OCI-LY7 (cell line): ENCODE measurements at regions of chr5 and their contacts with region 1.

Region 1: DNA sequence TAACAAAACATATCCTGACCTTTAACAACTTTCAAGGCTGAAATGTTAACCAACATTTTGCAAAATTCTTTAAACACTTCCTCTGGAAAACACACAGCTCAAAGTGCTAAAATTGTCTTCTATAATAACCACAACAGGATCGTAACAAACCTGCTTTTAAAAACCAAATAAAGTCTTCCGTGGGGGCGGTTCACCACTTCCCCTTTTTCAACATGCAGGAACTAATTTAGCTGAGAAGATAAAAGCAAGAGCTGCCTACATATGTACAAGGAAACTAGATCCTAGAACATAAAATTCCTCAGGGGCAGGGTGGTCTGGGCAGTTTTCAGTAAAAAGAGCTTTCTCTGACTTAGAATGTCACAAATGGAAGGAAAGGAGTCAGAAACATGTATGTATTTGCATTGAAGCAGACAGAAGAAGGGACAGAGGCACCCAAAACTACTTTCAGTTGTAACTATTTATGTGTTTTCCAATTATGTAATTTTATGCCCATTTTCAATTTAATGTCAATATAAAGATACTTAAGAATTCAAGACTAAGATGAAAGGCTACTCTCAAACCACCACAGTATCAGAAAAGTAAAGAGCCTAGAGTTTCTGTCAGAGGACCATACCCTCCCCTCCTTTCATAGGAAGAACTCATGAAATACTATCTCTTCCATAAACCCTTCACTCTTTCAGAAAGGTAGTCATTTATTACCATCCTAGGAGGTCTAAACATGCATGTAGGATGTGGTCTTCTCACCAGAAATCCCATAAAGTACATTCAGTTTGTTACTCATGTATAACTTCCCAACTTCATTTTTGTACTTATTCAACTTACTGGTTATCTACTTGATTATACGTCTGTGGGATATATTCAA is 185.9 kb upstream of the RASA1 start:
- DNase-seq: peak; percentile 77
- H3K4me3 ChIP-seq: peak overlapping the region; percentile 54
- H3K27ac ChIP-seq: peak overlapping the region; percentile 77
- H3K4me1 ChIP-seq: peaks cover 40% of the 10 kb centered on the region
- CTCF ChIP-seq: no peak

Region 2: DNA sequence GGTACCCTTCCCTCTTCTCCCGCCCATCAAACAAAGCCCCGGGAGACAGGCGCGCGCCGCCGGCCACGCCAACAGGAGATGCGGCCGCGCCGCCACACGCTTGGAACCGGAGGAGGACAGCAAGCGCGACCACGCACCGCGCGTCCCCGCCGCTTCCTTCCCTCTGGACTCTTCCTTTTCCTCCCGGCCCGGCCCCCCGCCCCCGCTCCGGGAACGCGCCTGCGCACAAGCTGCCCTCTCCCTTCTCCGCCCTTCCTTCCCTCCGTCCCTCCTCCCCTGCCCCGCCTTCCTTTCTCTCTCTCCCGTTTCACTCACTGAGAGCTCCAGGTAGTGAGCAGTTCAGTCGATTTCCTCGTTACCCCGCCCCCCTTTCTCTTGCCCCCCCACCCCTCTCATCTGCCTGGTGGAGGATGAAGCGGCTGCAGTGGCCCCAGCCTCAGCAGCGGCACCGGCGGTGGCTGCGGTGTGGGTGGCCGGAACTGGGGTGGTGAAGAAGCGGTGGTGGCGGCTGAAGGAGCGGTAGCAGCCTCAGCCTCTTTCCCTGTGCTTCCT is 185.9 kb after region 1 on chr5 and contains the start of gene RASA1:
- CTCF ChIA-PET with region 1: interaction called, 3 read pairs
- POLR2A ChIA-PET with region 1: interaction called, 9 read pairs
- intact Hi-C with region 1: loop called (anchors 5 kb)
- DNase-seq: peak; percentile 86
- H3K4me3 ChIP-seq: peak within 1 kb of the TSS; percentile 84
- H3K27ac ChIP-seq: peak within 1 kb of the TSS; percentile 74
- H3K4me1 ChIP-seq: peaks cover 16% of the 10 kb centered on the region
- CTCF ChIP-seq: no peak
- total RNA-seq, gene RASA1: 17.1 and 18.1 TPM in 2 replicates

Region 3: GRCh38 chr5:87432460-87432859 is 350.7 kb after region 1 on chr5:
- CTCF ChIA-PET with region 1: no interaction called
- POLR2A ChIA-PET with region 1: no interaction called
- intact Hi-C with region 1: no loop called
- DNase-seq: no peak
- H3K4me3 ChIP-seq: no peak overlapping the region
- H3K27ac ChIP-seq: no peak overlapping the region
- H3K4me1 ChIP-seq: no peaks in the 10 kb centered on the region
- CTCF ChIP-seq: no peak

Region 4: GRCh38 chr5:88108490-88109279 is 1026.9 kb after region 1 on chr5:
- CTCF ChIA-PET with region 1: no interaction called
- POLR2A ChIA-PET with region 1: no interaction called
- intact Hi-C with region 1: no loop called
- DNase-seq: no peak
- H3K4me3 ChIP-seq: no peak overlapping the region
- H3K27ac ChIP-seq: no peak overlapping the region
- H3K4me1 ChIP-seq: no peaks in the 10 kb centered on the region
- CTCF ChIP-seq: no peak